Heart left ventricle (tissue), 16 donors: ENCODE measurements at regions of chr16 and their contacts with region 1.

Region 1: DNA sequence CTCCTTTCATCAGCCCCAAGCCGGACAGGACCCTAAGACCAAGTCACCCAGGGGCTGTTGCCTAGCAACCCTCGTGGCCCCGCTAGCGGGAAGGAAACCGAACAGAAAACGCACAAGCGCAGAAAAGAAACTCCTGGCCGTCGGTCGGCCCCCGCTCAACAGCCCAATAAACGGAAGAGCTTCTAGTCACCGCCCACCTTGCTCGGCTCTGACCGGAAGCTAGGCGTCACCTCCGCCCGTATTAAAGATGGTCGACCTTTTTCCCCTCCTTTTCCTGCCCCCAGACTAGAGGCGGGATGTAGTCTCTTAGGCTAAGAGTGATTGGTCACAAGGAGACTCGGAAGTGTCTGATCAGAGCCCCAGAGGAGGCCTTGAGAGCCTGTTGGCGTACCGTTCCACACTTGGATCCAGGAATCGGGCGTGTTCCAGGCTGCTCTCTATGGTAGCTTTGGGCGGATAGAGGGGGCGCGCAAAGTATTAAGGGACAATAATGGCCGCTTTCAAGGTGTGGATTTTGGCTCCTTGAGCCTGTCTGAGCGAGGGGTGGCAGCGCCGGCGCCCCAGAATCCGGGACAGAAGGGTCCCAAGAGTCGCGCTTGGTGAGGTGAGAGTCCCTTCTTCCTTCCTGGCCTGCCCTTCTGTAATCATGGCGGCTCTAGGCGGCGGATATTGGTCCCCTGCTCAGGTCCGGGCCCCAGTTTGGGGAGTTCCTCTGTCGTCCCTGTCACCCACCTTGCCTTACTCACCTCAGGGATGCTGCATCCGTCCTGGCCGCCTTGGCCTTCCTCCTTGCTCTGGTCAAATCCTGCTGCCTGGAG is at the starts of genes DHX38 and TXNL4B:
- DNase-seq: peak; percentile 92 to 96 (median 95)
- ATAC-seq: peak; percentile 99 to 100 (median 100)
- H3K4me3 ChIP-seq: peak within 1 kb of the TSS; percentile 65 to 97 (median 86)
- H3K27ac ChIP-seq: peak within 1 kb of the TSS; percentile 69 to 96 (median 91)
- H3K4me1 ChIP-seq: peaks cover 5 to 35% (median 28%) of the 10 kb centered on the region in 12 donors
- H3K27me3 ChIP-seq: no peaks in the 10 kb centered on the region
- CTCF ChIP-seq: no peak
- POLR2A ChIP-seq: peak; percentile 66 to 84
- total RNA-seq, gene DHX38: 30.6 to 66.5 (median 41.4) TPM
- total RNA-seq, gene TXNL4B: 4.6 to 10.5 (median 7.0) TPM

Region 2: DNA sequence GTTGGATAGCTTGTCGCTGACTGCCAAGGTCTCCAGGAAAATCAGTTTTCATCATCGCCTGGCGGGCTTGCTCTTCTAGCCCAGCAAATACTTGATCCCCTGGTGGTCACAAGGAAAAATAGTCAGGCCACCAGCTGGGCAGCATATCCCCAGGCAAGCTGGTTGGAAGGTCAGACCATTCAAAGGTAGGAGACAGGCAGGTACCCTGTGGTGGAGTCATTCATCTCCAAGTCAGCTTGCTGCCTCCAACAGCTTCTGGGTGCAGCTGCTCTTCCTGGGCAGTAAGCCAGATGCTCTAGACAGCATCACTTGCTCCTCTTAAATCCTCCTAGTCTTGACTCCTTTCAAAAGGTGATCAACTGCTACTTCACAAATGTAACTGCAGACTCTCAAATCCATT is 225.7 kb before region 1 on chr16:
- intact Hi-C with region 1: no loop called
- DNase-seq: no peak
- ATAC-seq: no peak
- H3K4me3 ChIP-seq: no peak overlapping the region
- H3K27ac ChIP-seq: no peak overlapping the region
- H3K4me1 ChIP-seq: no peaks in the 10 kb centered on the region
- H3K27me3 ChIP-seq: no peaks in the 10 kb centered on the region
- CTCF ChIP-seq: no peak
- POLR2A ChIP-seq: no peak

Region 3: DNA sequence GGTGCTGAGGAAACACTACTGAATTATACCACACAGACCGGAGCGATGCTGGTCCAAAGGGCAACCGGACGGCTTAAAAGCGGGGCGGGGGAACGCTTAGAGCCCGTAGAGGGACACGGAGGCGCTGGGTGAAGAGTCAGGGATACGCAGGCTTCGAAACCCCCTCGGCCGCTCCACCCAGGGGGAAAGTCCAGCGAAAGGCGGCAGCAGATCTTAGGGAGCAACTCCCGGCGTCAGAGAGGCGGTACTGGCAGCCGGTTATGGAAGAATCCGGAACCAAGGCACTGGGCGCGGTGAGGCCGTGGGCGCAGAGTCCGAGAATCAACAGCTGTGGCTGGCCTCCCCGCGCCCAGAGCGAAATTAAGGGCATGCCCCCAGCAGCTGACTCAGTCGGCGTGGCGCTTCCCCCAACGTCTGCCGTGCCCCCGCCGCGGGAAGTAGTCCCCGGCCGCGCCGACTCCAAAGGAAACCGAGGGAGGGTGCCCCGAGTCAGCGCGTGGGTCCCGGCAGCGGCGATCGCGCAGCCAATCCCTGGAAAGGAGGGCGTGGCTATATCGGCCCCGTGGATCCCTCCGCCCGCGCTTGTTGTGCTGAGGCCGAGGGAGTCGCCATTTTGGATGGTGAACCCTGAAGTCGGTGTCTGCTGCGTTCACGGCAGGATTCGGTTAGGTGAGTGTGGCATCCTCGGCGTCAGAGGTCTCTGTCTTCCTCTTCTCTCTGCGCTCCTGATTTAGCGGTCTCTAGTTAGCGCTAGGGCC is 198.6 kb before region 1 on chr16 and contains the start of gene IST1:
- intact Hi-C with region 1: loop called in 1 of 10 experiments (anchors 10 kb)
- DNase-seq: peak; percentile 99
- ATAC-seq: peak; percentile 95 to 98 (median 98)
- H3K4me3 ChIP-seq: peak within 1 kb of the TSS; percentile 69 to 99 (median 90)
- H3K27ac ChIP-seq: peak within 1 kb of the TSS; percentile 87 to 99 (median 98)
- H3K4me1 ChIP-seq: peaks cover 4 to 45% (median 34%) of the 10 kb centered on the region in 12 donors
- H3K27me3 ChIP-seq: no peaks in the 10 kb centered on the region
- CTCF ChIP-seq: peak in 1 of 12 donors; percentile 4
- POLR2A ChIP-seq: peak; percentile 29 to 93
- total RNA-seq, gene IST1: 89.2 to 146 (median 109) TPM

Region 4: GRCh38 chr16:71933913-71934695 is 159.6 kb before region 1 on chr16:
- intact Hi-C with region 1: no loop called
- DNase-seq: no peak
- ATAC-seq: peak in 2 of 4 donors; percentile 12 to 21
- H3K4me3 ChIP-seq: no peak overlapping the region
- H3K27ac ChIP-seq: peak overlapping the region in 4 of 12 donors; percentile 6 to 24 (median 15)
- H3K4me1 ChIP-seq: peaks cover 0 to 44% (median 24%) of the 10 kb centered on the region in 12 donors
- H3K27me3 ChIP-seq: no peaks in the 10 kb centered on the region
- CTCF ChIP-seq: no peak
- POLR2A ChIP-seq: no peak

Region 5: GRCh38 chr16:72008424-72009216 is 85.0 kb before region 1 on chr16 and contains the start of gene DHODH:
- intact Hi-C with region 1: loop called in 4 of 10 experiments (anchors 1 to 5 kb)
- DNase-seq: peak; percentile 98 to 99 (median 99)
- ATAC-seq: peak; percentile 100
- H3K4me3 ChIP-seq: peak within 1 kb of the TSS; percentile 69 to 96 (median 86)
- H3K27ac ChIP-seq: peak within 1 kb of the TSS in 9 of 12 donors; percentile 30 to 79 (median 62)
- H3K4me1 ChIP-seq: peaks cover 0 to 14% (median 10%) of the 10 kb centered on the region in 12 donors
- H3K27me3 ChIP-seq: no peaks in the 10 kb centered on the region
- CTCF ChIP-seq: peak in 3 of 12 donors; percentile 33 to 44 (median 33)
- POLR2A ChIP-seq: peak in 1 of 2 donors; percentile 64
- total RNA-seq, gene DHODH: 5.2 to 9.8 (median 7.5) TPM

Region 6: GRCh38 chr16:72013888-72014581 is 79.6 kb before region 1 on chr16:
- intact Hi-C with region 1: loop called in 3 of 10 experiments (anchors 2 to 5 kb)
- DNase-seq: peak in 4 of 5 donors; percentile 39 to 55 (median 40)
- ATAC-seq: peak; percentile 40 to 61 (median 54)
- H3K4me3 ChIP-seq: peak overlapping the region in 9 of 12 donors; percentile 2 to 27 (median 15)
- H3K27ac ChIP-seq: peak overlapping the region; percentile 42 to 78 (median 62)
- H3K4me1 ChIP-seq: peaks cover 2 to 23% (median 17%) of the 10 kb centered on the region in 12 donors
- H3K27me3 ChIP-seq: no peaks in the 10 kb centered on the region
- CTCF ChIP-seq: no peak
- POLR2A ChIP-seq: no peak

Region 7: DNA sequence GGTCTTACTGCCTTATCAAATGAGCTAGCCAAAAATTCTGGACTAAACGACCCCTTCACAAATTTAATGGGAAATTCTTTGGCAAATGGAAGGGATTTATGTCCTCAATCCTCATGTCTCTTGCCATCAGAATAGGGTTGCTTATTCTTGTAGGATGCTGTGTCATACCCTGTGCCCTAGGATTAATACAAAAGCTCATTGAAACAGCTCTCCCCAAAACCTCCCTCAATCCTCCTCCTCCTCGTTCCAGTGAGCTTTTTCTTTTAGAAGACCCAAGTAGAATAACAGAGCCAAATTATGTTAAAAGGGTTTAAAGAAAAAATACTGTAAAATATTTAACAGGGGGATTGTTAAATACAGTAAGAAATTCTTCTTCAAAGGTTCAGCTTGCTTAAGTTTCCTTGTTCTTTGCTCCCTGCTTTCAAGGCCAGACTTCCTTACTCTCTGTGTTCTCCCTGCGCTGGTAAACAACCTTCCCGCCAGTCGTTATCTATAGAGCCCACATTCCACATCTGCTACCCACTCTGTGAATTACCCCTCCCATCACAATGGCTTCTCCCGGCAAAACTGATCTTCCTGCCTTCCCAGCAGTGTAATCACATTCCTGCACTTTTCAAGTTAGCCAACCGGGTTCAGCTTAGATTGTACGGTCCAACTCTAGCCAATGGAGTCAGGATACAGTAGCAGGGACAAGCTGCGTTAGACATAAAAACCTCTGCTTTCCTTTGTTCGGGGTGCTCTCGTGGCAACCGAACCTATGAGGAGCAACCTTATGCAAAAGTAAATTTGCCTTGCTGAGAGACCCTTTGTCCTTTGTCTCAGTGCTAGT is 20.9 kb before region 1 on chr16:
- intact Hi-C with region 1: loop called in 6 of 10 experiments (anchors 1 to 2 kb)
- DNase-seq: peak in 3 of 5 donors; percentile 25 to 56 (median 27)
- ATAC-seq: peak; percentile 40 to 78 (median 74)
- H3K4me3 ChIP-seq: peak overlapping the region in 7 of 12 donors; percentile 1 to 32 (median 3)
- H3K27ac ChIP-seq: peak overlapping the region; percentile 14 to 98 (median 86)
- H3K4me1 ChIP-seq: peaks cover 0 to 36% (median 7%) of the 10 kb centered on the region in 12 donors
- H3K27me3 ChIP-seq: no peaks in the 10 kb centered on the region
- CTCF ChIP-seq: no peak
- POLR2A ChIP-seq: no peak